ENCODE measurements at regions of chr15 and their contacts with region 1.

Region 1: DNA sequence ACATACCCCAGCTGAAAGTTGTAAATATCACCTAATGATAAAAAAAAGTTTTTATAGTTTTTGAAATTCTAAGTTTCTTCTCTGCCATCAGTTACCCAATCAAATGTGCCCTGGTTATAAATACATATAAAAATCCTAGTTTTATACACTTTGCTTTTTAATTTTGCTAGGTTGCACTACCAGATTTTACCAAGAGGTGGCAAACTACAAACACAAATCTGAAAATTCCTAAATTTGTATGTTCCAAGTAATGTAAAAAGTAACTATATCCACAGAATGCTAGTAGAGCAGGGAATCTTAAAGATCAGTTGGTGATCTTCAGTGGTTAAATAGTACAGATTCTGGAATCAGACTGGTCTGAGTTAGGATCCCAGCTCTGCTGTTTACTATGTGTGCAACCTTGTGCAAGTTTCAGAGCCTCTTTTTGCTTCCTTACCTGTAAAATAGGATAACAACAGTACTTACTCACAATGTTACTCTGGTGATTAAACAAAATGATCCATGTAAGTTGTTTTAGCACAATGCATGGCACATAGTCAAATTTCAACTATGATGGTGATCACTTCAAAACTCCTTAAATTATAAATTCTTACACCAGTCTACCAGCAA is 11.0 kb downstream of the TRPM7 start:
- DNase-seq: peak in 1 of 4 experiments; percentile 27
- ATAC-seq: no peak
- H3K4me3 ChIP-seq: no peak overlapping the region
- H3K27ac ChIP-seq: no peak overlapping the region
- H3K4me1 ChIP-seq: peaks cover 7 to 12% of the 10 kb centered on the region in 2 experiments; a peak in 4 of 5 replicates
- H3K27me3 ChIP-seq: no peaks in the 10 kb centered on the region
- CTCF ChIP-seq: peak; percentile 48 to 77 (median 50); a peak in 4 of 6 replicates
- EP300 ChIP-seq: no peak
- POLR2A ChIP-seq: no peak
- RAD21 ChIP-seq: peak; percentile 56 to 77

Region 2: GRCh38 chr15:50908210-50909009 is 232.8 kb after region 1 on chr15 and contains the start of gene AP4E1:
- CTCF ChIA-PET with region 1: interaction called, 31 read pairs
- POLR2A ChIA-PET with region 1: interaction called, 3 read pairs
- in situ Hi-C with region 1: no loop called
- intact Hi-C with region 1: loop called (anchors 1 kb)
- DNase-seq: peak; percentile 76 to 95 (median 79)
- ATAC-seq: peak; percentile 82
- H3K4me3 ChIP-seq: peak within 1 kb of the TSS; percentile 98
- H3K27ac ChIP-seq: peak within 1 kb of the TSS; percentile 92
- H3K4me1 ChIP-seq: peaks cover 0 to 12% of the 10 kb centered on the region in 2 experiments; a peak in 2 of 5 replicates
- H3K27me3 ChIP-seq: no peaks in the 10 kb centered on the region
- CTCF ChIP-seq: peak; percentile 91 to 97 (median 93)
- EP300 ChIP-seq: peak; percentile 67
- POLR2A ChIP-seq: peak; percentile 88
- RAD21 ChIP-seq: peak; percentile 87 to 96
- polyA plus RNA-seq, gene AP4E1: 1.3 to 2.2 TPM

Measured in K562 (cell line).